Mammary epithelial cell (primary cell): ENCODE measurements at regions of chr10 and their contacts with region 1.

Region 1: DNA sequence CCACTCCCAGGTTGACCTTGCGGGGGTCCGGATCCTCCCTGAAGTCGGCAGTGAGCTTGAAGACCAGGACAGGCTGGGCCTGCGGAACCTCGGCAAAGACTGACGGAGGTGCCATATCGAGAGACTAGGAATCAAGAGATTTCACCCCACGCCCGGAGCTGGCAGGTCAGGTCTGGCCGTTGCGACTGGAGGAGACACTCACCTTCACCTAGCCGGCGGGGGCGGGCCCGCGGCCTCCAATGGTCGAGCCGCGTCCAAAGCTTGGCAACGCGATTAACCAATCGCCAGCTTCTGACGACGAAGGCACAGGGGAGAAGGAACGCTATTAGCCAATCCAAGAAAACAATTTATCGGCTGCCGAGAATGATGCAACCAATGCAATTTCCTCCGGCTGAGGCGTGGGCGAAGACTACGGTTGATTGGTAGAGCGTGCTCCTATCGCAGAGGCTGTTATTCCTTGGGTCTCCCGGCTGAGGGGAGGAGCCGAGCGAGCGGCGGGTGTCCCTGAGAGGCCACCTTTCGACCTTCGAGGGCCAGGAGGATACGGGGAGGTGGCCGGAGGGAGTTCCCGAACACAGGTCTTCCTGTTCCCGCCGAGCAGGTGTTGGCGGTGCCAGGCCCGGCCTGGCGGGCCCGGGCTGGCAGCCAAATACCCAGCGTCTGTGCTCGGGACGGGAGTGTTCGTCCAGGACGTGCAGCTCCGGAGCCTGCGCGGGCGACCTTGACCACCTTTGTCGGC is at the start of gene GOT1:
- DNase-seq: peak; percentile 100
- H3K4me3 ChIP-seq: peak within 1 kb of the TSS; percentile 82 to 97 (median 90)
- H3K27ac ChIP-seq: peak within 1 kb of the TSS; percentile 84
- H3K4me1 ChIP-seq: peaks cover 10% of the 10 kb centered on the region
- H3K27me3 ChIP-seq: no peaks in the 10 kb centered on the region
- CTCF ChIP-seq: no peak
- total RNA-seq, gene GOT1: 70.0 to 75.5 TPM

Region 2: DNA sequence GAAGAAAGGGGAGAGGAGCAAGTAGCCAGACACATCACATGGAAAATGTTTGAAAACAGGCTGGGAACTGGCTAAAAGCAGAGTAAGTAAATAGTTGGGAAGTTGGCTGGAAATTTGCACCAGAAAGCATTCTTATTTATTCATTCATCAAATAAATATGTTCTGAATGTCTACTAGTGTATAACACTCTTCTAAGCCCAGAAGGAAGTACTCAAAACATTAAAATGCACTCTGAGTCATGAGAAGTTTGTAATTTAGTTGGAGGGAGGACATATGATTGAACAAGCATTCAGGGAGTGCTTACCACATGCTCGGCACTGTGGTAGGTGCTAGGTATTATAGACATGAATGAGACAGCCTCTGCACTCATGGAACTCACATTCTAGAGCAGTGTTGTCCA is 138.5 kb before region 1 on chr10:
- CTCF ChIA-PET with region 1: no interaction called
- dilution Hi-C with region 1: no loop called
- in situ Hi-C with region 1: no loop called
- intact Hi-C with region 1: loop called (anchors 2 kb)
- DNase-seq: peak; percentile 70
- H3K4me3 ChIP-seq: no peak overlapping the region
- H3K27ac ChIP-seq: no peak overlapping the region
- H3K4me1 ChIP-seq: no peaks in the 10 kb centered on the region
- H3K27me3 ChIP-seq: no peaks in the 10 kb centered on the region
- CTCF ChIP-seq: no peak

Region 3: DNA sequence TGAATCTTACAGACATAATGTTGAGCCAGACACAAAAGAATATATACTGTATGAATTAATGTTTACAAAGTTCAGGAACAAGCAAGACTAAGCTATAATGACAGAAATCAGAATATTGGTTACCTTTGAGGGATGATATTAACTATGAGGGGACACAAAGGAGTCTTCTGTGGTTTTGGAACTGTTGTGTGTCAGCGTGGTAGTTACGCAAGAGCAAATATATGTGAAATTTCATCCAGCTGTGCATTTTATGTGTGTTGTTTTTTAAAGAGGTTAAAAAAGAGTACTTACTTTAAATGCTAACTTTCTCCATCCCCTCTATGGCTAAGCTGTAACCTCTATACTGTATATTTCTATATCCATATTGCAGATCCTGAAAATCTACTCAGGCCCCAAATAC is 174.7 kb after region 1 on chr10:
- CTCF ChIA-PET with region 1: no interaction called
- dilution Hi-C with region 1: loop called (anchors 10 kb)
- in situ Hi-C with region 1: loop called (anchors 10 kb)
- intact Hi-C with region 1: no loop called
- DNase-seq: no peak
- H3K4me3 ChIP-seq: no peak overlapping the region
- H3K27ac ChIP-seq: no peak overlapping the region
- H3K4me1 ChIP-seq: no peaks in the 10 kb centered on the region
- H3K27me3 ChIP-seq: no peaks in the 10 kb centered on the region
- CTCF ChIP-seq: no peak

Region 4: GRCh38 chr10:99620713-99621453 is 190.3 kb after region 1 on chr10:
- CTCF ChIA-PET with region 1: no interaction called
- dilution Hi-C with region 1: no loop called
- in situ Hi-C with region 1: loop called (anchors 10 kb)
- intact Hi-C with region 1: loop called (anchors 2 kb)
- DNase-seq: peak; percentile 95
- H3K4me3 ChIP-seq: peak overlapping the region; percentile 59 to 76 (median 66)
- H3K27ac ChIP-seq: peak overlapping the region; percentile 96
- H3K4me1 ChIP-seq: peaks cover 22% of the 10 kb centered on the region
- H3K27me3 ChIP-seq: no peaks in the 10 kb centered on the region
- CTCF ChIP-seq: peak in 1 of 2 donors; percentile 11

Region 5: GRCh38 chr10:100114976-100115770 is 684.6 kb after region 1 on chr10:
- CTCF ChIA-PET with region 1: no interaction called
- dilution Hi-C with region 1: no loop called
- in situ Hi-C with region 1: no loop called
- intact Hi-C with region 1: no loop called
- DNase-seq: no peak
- H3K4me3 ChIP-seq: no peak overlapping the region
- H3K27ac ChIP-seq: no peak overlapping the region
- H3K4me1 ChIP-seq: no peaks in the 10 kb centered on the region
- H3K27me3 ChIP-seq: peaks cover 2% of the 10 kb centered on the region
- CTCF ChIP-seq: no peak